Esophagus muscularis mucosa (tissue), 4 donors: ENCODE measurements at regions of chr9 and their contacts with region 1.

Region 1: GRCh38 chr9:95065224-95065623 is 252.3 kb downstream of the FANCC start:
- DNase-seq: no peak
- H3K4me3 ChIP-seq: peak overlapping the region in 1 of 4 donors; percentile 6
- H3K27ac ChIP-seq: peak overlapping the region; percentile 81 to 95 (median 86)
- H3K4me1 ChIP-seq: peaks cover 98 to 100% (median 100%) of the 10 kb centered on the region in 4 donors
- H3K27me3 ChIP-seq: no peaks in the 10 kb centered on the region
- CTCF ChIP-seq: no peak
- EP300 ChIP-seq: no peak
- POLR2A ChIP-seq: no peak

Region 2: GRCh38 chr9:95025213-95026147 is 39.7 kb before region 1 on chr9:
- intact Hi-C with region 1: loop called (anchors 5 kb)
- DNase-seq: no peak
- H3K4me3 ChIP-seq: peak overlapping the region in 3 of 4 donors; percentile 15
- H3K27ac ChIP-seq: peak overlapping the region; percentile 78 to 99 (median 88)
- H3K4me1 ChIP-seq: peaks cover 90 to 100% (median 100%) of the 10 kb centered on the region in 4 donors
- H3K27me3 ChIP-seq: no peaks in the 10 kb centered on the region
- CTCF ChIP-seq: peak in 2 of 3 experiments; percentile 31 to 57
- EP300 ChIP-seq: no peak
- POLR2A ChIP-seq: no peak